ENCODE measurements at regions of chr13 and their contacts with region 1.

Region 1: DNA sequence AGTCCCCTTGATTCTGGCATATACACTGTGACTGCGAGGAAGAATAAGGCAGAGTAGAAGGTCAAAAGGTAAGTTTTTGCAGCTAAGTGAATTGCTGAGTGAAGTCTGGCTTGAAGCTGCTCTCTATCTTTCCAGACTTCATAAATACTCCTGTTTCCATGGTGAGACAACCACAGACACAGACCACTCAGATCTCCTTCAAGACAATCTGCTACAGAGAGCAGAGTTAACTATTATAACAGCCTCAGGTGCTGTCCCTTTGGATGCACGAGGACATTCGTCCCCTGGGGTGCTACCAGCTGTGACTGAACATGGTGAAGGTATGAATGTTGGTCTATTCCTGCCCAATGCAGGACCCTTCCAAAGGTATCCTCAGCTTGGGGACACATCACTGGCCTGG is 104.0 kb downstream of the MYCBP2 start:
- DNase-seq: no peak
- ATAC-seq: no peak

Region 2: DNA sequence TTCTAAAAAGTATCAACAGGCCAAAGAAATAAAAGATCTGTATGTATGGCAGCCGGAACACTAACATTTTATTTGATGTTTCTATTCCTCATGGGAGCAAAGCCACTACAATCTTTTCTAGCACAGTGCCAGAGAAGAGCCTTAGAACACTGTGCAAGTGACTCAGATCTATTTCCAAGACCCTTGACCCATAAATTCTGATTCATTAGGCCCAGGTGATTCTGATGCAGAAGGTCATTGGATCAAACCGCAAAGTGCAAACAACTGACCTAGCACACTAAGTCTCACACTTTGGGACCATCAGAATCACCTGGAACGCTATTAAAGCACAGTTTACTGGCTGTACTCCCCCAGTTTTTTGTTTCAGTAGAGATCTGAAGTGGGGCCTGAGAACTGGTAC is 16.4 kb after region 1 on chr13:
- intact Hi-C with region 1: loop called (anchors 2 kb)
- DNase-seq: no peak
- ATAC-seq: no peak

Region 3: GRCh38 chr13:78131811-78132210 is 908.9 kb after region 1 on chr13:
- intact Hi-C with region 1: no loop called
- DNase-seq: no peak
- ATAC-seq: no peak